PC-3 (cell line): ENCODE measurements at regions of chr2 and their contacts with region 1.

Region 1: DNA sequence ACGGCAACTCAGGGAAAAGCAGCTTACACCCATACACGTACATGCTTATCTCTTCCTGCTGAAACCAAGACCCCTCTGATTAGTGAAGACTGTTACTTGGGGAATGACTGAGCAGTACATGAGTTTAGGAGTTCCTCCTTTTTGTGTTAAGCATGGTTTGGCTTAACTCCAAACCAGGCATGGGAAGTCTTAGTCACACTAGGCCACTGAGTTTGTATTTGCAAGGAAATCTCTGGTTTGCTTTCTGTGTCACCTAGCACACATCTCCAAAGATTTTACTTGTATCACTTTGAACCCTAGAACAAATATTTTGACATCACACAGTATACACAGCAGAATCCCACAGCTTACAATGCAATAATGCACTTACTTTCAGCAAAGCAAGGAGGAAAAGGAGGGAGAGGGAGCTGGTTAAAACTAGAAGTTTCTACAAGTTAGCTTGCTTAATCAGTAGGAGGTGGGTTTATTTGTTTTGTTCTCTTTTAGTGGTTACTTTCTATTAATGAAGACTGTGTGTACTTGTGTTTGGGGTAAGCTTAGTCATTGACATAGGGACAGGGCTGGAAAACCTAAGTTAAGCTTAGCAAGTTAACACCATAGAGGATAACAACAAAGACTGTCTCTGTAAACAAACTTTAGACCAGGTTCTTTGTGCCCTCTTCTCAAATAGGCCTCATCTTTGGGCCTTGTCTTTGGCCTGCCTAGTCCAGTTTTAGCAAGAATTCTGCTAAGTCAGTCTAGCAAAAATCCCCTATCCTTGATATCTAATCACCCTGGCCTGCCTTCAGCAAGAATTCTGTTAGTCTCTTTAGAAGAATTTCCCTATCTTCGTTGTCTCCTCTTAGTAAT is 219.4 kb downstream of the MREG start:
- DNase-seq: peak; percentile 97
- ATAC-seq: peak; percentile 92
- H3K4me3 ChIP-seq: no peak overlapping the region
- H3K27ac ChIP-seq: peak overlapping the region; percentile 80
- H3K4me1 ChIP-seq: peaks cover 35% of the 10 kb centered on the region
- H3K27me3 ChIP-seq: no peaks in the 10 kb centered on the region
- CTCF ChIP-seq: no peak

Region 2: DNA sequence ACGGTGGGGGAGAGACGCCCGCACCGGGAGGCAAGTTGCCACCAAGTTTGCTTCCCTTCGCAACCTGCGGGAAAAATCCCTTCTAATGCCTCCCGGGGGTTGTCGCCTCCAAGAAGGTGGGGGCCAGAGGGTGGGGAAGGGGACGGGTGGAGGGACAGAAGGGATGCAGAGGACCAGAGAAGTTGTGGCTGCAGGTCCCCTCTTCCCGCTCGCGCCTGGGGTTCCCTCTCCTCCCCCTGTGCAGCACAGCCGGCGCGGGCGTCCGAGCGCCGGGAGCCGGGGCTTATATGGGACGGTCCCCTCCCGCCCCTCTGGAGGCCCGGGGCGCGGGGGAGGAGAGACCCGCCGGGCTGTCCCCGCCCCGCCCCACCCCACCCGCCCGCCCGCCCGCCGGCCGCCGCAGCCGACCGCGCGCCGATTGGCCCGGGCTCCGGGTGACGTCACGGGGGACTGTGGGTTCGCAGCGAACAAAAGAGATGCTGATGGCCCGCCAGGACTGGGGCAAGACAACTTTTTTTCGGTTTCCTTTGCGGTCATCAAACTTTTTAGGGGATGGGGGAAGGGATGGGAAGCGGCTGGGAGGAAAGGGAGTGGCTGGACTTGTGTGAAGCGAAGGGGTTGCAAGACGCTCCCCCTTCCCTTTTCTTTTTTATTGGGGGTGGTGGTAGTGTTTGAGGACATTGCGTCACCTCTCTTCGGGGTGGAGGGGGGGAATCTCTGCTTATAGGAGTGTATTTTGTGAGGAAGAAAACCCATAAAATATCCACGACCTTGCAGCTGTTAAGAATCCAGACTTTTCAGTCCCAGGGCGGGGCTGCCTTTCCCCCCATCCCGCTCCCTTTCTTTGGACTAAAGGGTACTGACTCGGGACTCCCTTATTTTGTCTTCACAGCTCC is 357.9 kb before region 1 on chr2 and contains the start of gene FN1:
- CTCF ChIA-PET with region 1: no interaction called
- POLR2A ChIA-PET with region 1: no interaction called
- intact Hi-C with region 1: loop called (anchors 2 kb)
- DNase-seq: peak; percentile 82
- ATAC-seq: peak; percentile 59
- H3K4me3 ChIP-seq: peak within 1 kb of the TSS; percentile 97
- H3K27ac ChIP-seq: peak within 1 kb of the TSS; percentile 82
- H3K4me1 ChIP-seq: peaks cover 38% of the 10 kb centered on the region
- H3K27me3 ChIP-seq: no peaks in the 10 kb centered on the region
- CTCF ChIP-seq: no peak
- total RNA-seq, gene FN1: 220 and 248 TPM in 2 replicates

Region 3: DNA sequence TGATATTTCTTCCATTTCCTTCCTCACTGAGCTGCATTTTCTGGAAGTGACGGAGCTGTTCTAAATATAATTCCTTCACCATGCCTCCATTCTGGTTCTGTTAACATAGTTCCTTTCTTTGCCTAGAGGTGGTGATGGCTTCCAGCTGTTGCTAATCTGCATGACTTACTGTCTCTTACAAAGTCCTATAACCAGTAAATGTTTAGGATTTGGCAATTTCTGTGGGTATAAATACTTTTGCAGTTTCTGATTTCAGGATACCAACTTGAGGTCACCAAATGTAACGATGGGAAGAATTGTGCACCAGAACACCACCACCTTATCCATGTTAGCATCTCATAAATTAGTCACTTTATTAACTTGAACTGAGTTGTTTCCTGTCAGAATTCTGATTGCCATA is 256.4 kb before region 1 on chr2:
- CTCF ChIA-PET with region 1: no interaction called
- POLR2A ChIA-PET with region 1: no interaction called
- intact Hi-C with region 1: loop called (anchors 1 kb)
- DNase-seq: peak; percentile 74
- ATAC-seq: peak; percentile 47
- H3K4me3 ChIP-seq: no peak overlapping the region
- H3K27ac ChIP-seq: peak overlapping the region; percentile 84
- H3K4me1 ChIP-seq: peaks cover 41% of the 10 kb centered on the region
- H3K27me3 ChIP-seq: no peaks in the 10 kb centered on the region
- CTCF ChIP-seq: 0 out of 2 replicates have a peak, but pooled peaks have one; percentile 11

Region 4: DNA sequence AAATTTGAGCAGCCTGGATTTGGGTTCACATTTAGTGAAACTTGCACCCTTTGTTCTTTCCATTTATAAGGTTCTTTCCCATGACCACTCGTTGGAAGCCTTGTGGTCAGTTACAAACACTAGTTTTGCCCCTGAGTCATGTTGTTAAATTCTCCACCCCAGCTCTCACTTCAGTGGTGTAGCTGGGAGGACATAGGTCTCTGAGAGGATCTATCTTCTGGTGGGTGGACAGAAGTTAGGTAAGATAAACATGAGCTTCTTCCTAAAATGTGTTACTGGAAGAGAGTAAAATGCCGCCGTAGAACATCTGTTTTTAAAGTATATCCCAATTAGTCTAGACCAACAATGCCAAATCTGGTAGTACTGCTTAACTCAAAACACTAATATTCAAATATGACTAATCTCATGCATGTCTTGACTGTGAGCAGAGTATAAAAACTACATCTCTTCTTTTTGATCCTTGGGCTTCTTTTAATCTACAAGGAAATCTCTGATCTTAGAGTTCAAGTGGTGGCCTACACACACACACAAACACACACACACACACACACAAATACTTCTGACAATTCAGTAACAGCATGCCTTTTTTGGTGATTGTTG is 195.5 kb before region 1 on chr2:
- CTCF ChIA-PET with region 1: no interaction called
- POLR2A ChIA-PET with region 1: no interaction called
- intact Hi-C with region 1: no loop called
- DNase-seq: peak; percentile 51
- ATAC-seq: peak; percentile 61; the same call in 1 of the 2 replicates
- H3K4me3 ChIP-seq: no peak overlapping the region
- H3K27ac ChIP-seq: no peak overlapping the region
- H3K4me1 ChIP-seq: peaks cover 9% of the 10 kb centered on the region
- H3K27me3 ChIP-seq: no peaks in the 10 kb centered on the region
- CTCF ChIP-seq: no peak

Region 5: DNA sequence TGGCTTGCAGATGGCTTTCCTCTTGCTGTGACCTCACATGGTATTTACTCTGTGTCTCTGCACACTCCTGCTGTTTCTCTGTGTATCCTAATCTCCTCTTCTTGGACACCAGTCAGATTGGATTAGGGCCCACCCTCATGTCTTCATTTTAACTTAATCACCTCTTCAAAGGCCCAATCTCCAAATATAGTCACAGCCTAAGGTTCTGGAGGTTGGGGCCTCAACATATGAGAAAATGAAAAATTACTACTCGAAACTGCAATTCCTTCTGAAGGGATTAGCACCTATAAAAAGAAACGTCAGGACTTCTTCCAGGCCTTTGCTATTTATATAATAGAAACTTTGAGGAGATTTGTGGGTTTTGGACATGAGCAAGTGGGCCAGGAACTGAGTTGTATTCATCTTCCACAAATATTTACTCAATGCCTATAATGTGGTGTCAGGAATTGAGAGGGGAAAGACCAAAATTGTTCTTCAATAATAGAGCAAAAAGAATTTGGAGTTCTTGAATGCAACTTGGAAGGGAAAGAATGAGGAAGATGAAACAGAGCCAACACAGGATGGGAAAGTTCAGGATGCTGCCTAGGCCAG is 88.1 kb before region 1 on chr2:
- CTCF ChIA-PET with region 1: no interaction called
- POLR2A ChIA-PET with region 1: interaction called, 3 read pairs
- intact Hi-C with region 1: loop called (anchors 1 kb)
- DNase-seq: peak; percentile 71
- ATAC-seq: peak; percentile 80
- H3K4me3 ChIP-seq: no peak overlapping the region; the same call in 1 of the 2 replicates
- H3K27ac ChIP-seq: peak overlapping the region; percentile 84
- H3K4me1 ChIP-seq: peaks cover 47% of the 10 kb centered on the region
- H3K27me3 ChIP-seq: no peaks in the 10 kb centered on the region
- CTCF ChIP-seq: no peak

Region 6: GRCh38 chr2:215751200-215751910 is 42.6 kb before region 1 on chr2:
- CTCF ChIA-PET with region 1: no interaction called
- POLR2A ChIA-PET with region 1: no interaction called
- intact Hi-C with region 1: loop called (anchors 1 kb)
- DNase-seq: peak; percentile 94
- ATAC-seq: peak; percentile 56
- H3K4me3 ChIP-seq: no peak overlapping the region
- H3K27ac ChIP-seq: peak overlapping the region; percentile 81
- H3K4me1 ChIP-seq: peaks cover 54% of the 10 kb centered on the region
- H3K27me3 ChIP-seq: no peaks in the 10 kb centered on the region
- CTCF ChIP-seq: no peak

Region 7: DNA sequence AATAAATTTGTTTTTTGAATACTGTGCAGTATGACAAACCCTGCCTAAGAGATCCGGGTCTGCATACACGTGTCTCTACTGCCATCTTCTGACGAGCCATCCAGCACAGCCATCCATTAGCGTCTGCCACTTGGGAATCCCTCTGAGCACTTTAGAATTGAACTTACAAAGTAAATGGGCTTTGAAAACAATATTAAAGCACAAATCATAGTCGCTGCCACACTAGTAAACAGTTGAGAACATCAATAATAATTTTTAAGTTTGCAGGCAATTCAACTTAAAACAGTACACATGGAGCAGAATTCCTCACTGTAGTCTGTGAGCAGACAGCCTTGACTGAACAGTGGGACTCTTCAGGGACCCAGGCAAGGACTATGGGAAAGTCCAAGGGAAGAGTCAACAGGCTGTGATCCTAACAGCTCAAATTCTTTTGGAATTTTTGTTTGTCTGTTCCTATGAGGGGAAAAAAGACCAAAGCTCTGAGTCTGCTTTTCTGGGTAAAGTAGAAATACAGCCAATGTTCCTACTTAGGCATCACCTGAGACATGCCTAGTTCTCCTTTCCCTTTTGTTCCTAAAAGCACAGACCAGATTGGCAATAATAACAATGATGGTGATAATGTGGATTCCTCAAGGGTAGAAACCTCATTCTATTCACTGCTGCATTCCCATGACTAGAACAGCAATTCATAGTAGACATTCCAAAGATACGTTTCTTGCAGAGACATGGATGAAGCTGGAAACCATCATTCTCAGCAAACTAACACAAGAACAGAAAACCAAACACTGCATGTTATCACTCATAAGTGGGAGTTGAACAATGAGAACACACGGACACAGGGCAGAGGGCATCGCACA is 126.5 kb after region 1 on chr2:
- CTCF ChIA-PET with region 1: no interaction called
- POLR2A ChIA-PET with region 1: no interaction called
- intact Hi-C with region 1: loop called (anchors 1 kb)
- DNase-seq: peak; percentile 84
- ATAC-seq: peak; percentile 82
- H3K4me3 ChIP-seq: no peak overlapping the region
- H3K27ac ChIP-seq: no peak overlapping the region
- H3K4me1 ChIP-seq: peaks cover 35% of the 10 kb centered on the region
- H3K27me3 ChIP-seq: no peaks in the 10 kb centered on the region
- CTCF ChIP-seq: peak; percentile 94